ENCODE measurements at regions of chr11 and their contacts with region 1.

Region 1: DNA sequence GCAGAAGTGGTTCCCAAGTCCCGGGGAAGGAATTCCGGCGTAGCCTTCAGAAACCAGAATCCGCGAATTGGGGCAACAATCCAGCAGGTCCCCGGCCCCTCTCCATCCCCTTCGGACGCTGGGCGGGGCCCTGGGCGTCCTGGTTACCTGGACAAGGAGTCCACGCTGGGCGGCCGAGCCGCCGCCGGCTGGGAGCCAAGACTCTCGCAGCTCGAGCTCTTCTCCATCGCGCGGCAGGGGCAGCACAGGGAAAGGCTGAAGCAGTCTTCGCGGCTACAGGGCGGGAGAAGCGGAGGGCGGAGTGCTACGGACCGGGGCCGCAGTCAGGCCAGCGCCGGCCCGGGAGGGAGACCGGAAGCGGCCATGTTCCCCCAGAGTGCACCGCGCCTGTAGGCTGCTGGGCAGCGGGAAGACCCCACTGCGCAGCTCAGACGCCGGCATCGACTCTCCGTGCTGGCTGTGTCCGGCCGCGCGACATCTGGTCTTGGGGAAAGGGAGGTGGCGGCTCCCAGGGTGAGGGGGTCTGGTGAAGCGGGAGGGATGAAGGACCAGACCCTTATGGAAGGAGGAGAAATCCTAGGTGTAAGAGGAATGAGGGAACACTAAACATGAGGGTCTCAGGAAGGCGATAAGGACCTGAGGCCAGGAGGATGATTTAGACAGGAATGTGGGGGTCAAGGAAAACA is at the start of gene MTMR2:
- DNase-seq: peak; percentile 90
- CTCF ChIP-seq: no peak

Region 2: DNA sequence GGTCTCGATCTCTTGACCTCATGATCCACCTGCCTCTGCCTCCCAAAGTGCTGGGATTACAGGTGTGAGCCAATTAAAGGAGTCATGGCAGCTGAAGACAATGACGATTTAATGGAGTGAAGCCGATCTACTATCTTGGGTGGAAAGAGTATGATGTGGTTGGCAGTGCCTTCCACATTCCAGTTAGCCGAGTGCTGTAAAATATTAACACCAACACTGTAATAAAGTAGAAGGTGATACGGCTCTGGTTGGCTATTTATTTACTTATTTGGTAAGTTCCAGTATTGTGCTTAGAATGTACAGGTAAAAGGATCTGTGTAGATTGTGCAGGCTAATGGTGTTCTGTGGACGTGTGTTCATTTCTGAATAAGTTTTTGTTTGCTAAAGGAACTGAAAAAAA is 149.7 kb after region 1 on chr11:
- CTCF ChIA-PET with region 1: no interaction called
- POLR2A ChIA-PET with region 1: interaction called, 16 read pairs
- DNase-seq: no peak
- CTCF ChIP-seq: no peak

Region 3: GRCh38 chr11:96306933-96307775 is 383.3 kb after region 1 on chr11:
- CTCF ChIA-PET with region 1: no interaction called
- POLR2A ChIA-PET with region 1: no interaction called
- DNase-seq: no peak
- CTCF ChIP-seq: no peak